Activated CD4-positive, alpha-beta memory T cell treated with anti-CD3 and anti-CD28 coated beads, Interleukin-2, amount 10 ng/mL, durations not matched to agents 7 days and 5 days (primary cell): ENCODE measurements at regions of chr5 and their contacts with region 1.

Region 1: GRCh38 chr5:52948418-52949076 is 40.6 kb upstream of the ITGA2 start:
- DNase-seq: peak; percentile 78
- H3K4me3 Mint-ChIP-seq: no peak overlapping the region
- H3K27ac Mint-ChIP-seq: peak overlapping the region; percentile 2
- H3K4me1 Mint-ChIP-seq: peaks cover 25% of the 10 kb centered on the region
- H3K27me3 Mint-ChIP-seq: peaks cover 2% of the 10 kb centered on the region

Region 2: GRCh38 chr5:52922386-52922785 is 26.2 kb before region 1 on chr5:
- CTCF ChIA-PET with region 1: no interaction called
- POLR2A ChIA-PET with region 1: no interaction called
- DNase-seq: no peak
- H3K4me3 Mint-ChIP-seq: no peak overlapping the region
- H3K27ac Mint-ChIP-seq: no peak overlapping the region
- H3K4me1 Mint-ChIP-seq: peaks cover 5% of the 10 kb centered on the region
- H3K27me3 Mint-ChIP-seq: peaks cover 10% of the 10 kb centered on the region

Region 3: DNA sequence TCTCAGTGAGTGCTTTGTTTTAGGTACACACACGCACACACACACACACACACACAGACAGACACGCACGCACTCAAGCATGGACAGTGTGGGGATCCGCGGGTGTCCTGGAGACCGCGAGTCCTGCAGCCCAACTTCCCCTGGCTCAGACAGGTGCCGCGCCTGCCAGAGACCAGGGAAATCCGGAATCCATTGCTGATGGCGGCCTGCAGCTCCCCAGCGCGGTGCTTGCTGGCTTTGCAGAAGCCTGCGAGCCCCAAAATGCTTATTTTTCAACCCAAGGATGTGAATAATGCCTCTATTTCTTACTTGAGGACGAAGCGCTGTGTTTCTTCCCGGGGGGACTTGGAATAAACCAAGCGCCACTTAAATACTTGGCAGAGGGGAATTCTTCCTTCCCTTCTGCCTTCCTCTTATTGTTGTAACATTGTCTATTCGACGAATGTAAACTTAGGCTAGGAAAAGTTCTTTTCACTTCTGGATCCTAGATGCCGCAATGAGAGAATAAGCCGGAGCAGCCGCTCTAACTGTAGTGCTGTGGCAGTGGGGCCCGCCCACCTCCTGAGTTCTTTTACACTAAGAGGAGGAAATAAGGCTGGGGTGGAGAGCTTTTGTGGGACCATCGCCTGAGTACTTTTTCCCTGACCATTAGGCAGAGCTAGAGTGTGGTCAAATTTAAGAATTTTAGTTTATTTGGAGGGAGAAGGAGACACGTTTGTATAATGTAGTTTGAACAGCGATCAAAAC is 41.4 kb after region 1 on chr5:
- CTCF ChIA-PET with region 1: interaction called, 37 read pairs
- POLR2A ChIA-PET with region 1: interaction called, 18 read pairs
- DNase-seq: peak; percentile 54
- H3K4me3 Mint-ChIP-seq: peak overlapping the region; percentile 79
- H3K27ac Mint-ChIP-seq: peak overlapping the region; percentile 17
- H3K4me1 Mint-ChIP-seq: peaks cover 57% of the 10 kb centered on the region
- H3K27me3 Mint-ChIP-seq: peaks cover 19% of the 10 kb centered on the region

Region 4: DNA sequence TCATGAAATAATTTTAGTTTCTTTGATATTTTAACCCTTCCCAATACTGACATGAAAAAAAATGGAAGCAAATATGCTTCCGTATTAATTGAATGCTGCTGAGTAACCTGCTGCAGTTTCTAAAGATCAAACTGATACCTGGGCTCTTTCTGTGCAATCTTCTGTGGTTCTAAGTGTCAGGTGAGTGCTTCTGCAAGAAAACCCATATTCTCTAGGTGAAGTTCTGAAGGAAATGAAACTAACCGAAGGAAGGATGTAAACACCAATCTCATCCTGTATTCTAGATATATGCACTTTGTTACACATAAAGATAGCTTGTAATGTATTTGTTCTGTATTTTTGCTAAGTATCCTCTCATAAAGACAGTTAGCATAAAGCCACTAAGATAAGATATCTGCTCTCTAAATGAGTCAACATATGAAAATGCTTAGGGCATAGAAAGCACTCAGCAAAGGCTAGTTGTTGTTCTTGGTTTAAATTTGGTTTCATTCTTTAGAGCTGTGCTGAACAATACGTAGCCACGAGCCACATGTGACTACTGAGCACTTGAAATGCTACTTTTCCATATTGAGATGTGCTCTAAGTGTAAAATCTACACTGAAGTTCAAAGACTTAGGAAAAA is 92.6 kb after region 1 on chr5:
- CTCF ChIA-PET with region 1: interaction called, 13 read pairs
- POLR2A ChIA-PET with region 1: interaction called, 6 read pairs
- DNase-seq: peak; percentile 48
- H3K4me3 Mint-ChIP-seq: peak overlapping the region; percentile 61
- H3K27ac Mint-ChIP-seq: peak overlapping the region; percentile 87
- H3K4me1 Mint-ChIP-seq: peaks cover 82% of the 10 kb centered on the region
- H3K27me3 Mint-ChIP-seq: no peaks in the 10 kb centered on the region

Region 5: GRCh38 chr5:53089345-53089991 is 140.9 kb after region 1 on chr5:
- CTCF ChIA-PET with region 1: interaction called, 133 read pairs
- POLR2A ChIA-PET with region 1: interaction called, 8 read pairs
- DNase-seq: no peak
- H3K4me3 Mint-ChIP-seq: peak overlapping the region; percentile 19
- H3K27ac Mint-ChIP-seq: peak overlapping the region; percentile 54
- H3K4me1 Mint-ChIP-seq: peaks cover 31% of the 10 kb centered on the region
- H3K27me3 Mint-ChIP-seq: peaks cover 5% of the 10 kb centered on the region

Region 6: GRCh38 chr5:53109443-53110127 is 161.0 kb after region 1 on chr5 and contains the start of gene MOCS2:
- CTCF ChIA-PET with region 1: interaction called, 21 read pairs
- POLR2A ChIA-PET with region 1: interaction called, 3 read pairs
- DNase-seq: peak; percentile 92
- H3K4me3 Mint-ChIP-seq: peak within 1 kb of the TSS; percentile 97
- H3K27ac Mint-ChIP-seq: peak within 1 kb of the TSS; percentile 68
- H3K4me1 Mint-ChIP-seq: peaks cover 48% of the 10 kb centered on the region
- H3K27me3 Mint-ChIP-seq: no peaks in the 10 kb centered on the region
- total RNA-seq, gene MOCS2: 26.0 to 26.9 TPM

Region 7: DNA sequence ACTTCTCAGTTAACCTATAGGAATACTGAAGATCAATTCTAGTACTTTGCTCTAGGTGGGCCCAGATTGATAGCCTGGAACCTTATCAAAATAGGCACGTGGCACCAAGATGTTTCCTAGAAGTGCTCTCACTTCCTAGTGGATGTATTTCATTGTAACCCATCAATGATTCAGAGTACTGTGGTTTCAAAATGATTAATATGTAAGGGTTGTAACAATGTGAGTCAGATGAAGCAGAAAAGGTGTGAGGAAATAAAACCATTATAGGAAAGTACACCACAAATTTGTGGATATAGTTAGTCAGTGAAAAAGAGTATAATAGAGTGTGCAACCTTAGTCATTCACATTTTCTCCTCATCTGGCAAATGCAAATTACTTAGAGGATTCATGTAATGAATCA is 354.6 kb after region 1 on chr5:
- CTCF ChIA-PET with region 1: no interaction called
- POLR2A ChIA-PET with region 1: no interaction called
- DNase-seq: no peak
- H3K4me3 Mint-ChIP-seq: no peak overlapping the region
- H3K27ac Mint-ChIP-seq: no peak overlapping the region
- H3K4me1 Mint-ChIP-seq: peaks cover 8% of the 10 kb centered on the region
- H3K27me3 Mint-ChIP-seq: peaks cover 4% of the 10 kb centered on the region